ENCODE measurements at regions of chr11 and their contacts with region 1.

Region 1: GRCh38 chr11:2298795-2299761 is 2.6 kb downstream of the C11orf21 start:
- DNase-seq: peak; percentile 21
- H3K4me3 ChIP-seq: no peak overlapping the region
- H3K27ac ChIP-seq: no peak overlapping the region
- H3K4me1 ChIP-seq: no peaks in the 10 kb centered on the region
- H3K27me3 ChIP-seq: no peaks in the 10 kb centered on the region
- CTCF ChIP-seq: peak; percentile 32 to 82

Region 2: DNA sequence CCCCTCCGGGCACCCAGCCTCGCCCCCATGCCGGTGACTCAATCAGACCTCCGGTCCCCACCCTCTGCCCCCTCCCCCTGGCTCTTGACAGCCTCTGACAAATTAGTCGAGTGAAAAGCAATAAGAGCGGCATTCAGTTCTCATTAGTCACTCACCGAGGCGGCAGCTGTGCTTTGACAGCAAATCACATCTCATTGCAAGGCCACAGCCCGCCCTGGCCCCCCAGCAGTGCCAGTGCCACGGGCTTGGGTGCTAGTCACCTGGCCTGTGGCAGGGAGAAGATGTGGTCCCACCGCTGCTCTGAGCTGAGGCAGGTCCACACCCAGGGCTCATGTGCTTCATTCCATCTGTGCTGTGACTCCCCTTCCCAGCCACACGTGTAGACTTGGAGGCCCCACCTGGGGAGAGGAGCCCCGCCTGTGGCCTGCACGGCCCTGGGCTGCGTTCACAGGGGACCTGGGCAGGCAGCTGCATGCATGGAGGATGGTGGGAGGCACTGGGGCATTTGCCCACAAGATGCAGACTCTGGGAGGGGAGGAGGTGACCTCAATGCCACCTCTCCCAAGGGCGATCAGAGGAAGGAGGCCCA is 120.1 kb before region 1 on chr11:
- CTCF ChIA-PET with region 1: no interaction called
- dilution Hi-C with region 1: loop called (anchors 5 kb)
- in situ Hi-C with region 1: no loop called
- intact Hi-C with region 1: no loop called
- DNase-seq: peak; percentile 82
- H3K4me3 ChIP-seq: no peak overlapping the region
- H3K27ac ChIP-seq: no peak overlapping the region
- H3K4me1 ChIP-seq: peaks cover 40% of the 10 kb centered on the region
- H3K27me3 ChIP-seq: no peaks in the 10 kb centered on the region
- CTCF ChIP-seq: no peak

Region 3: GRCh38 chr11:2202055-2202899 is 96.8 kb before region 1 on chr11:
- CTCF ChIA-PET with region 1: no interaction called
- dilution Hi-C with region 1: no loop called
- in situ Hi-C with region 1: loop called (anchors 5 to 10 kb)
- intact Hi-C with region 1: loop called (anchors 1 kb)
- DNase-seq: peak; percentile 41
- H3K4me3 ChIP-seq: no peak overlapping the region
- H3K27ac ChIP-seq: no peak overlapping the region
- H3K4me1 ChIP-seq: peaks cover 8% of the 10 kb centered on the region
- H3K27me3 ChIP-seq: no peaks in the 10 kb centered on the region
- CTCF ChIP-seq: no peak

Region 4: GRCh38 chr11:2342981-2343380 is 43.9 kb after region 1 on chr11:
- CTCF ChIA-PET with region 1: no interaction called
- dilution Hi-C with region 1: loop called (anchors 5 kb)
- in situ Hi-C with region 1: no loop called
- intact Hi-C with region 1: no loop called
- DNase-seq: peak; percentile 10
- H3K4me3 ChIP-seq: no peak overlapping the region
- H3K27ac ChIP-seq: no peak overlapping the region
- H3K4me1 ChIP-seq: no peaks in the 10 kb centered on the region
- H3K27me3 ChIP-seq: no peaks in the 10 kb centered on the region
- CTCF ChIP-seq: no peak